Lower lobe of right lung (tissue), 2 donors: ENCODE measurements at regions of chr9 and their contacts with region 1.

Region 1: GRCh38 chr9:4679268-4680172 is at the start of gene CDC37L1:
- DNase-seq: peak; percentile 98
- ATAC-seq: peak; percentile 99 to 100
- H3K4me3 ChIP-seq: peak within 1 kb of the TSS; percentile 81
- H3K27ac ChIP-seq: peak within 1 kb of the TSS; percentile 96
- H3K4me1 ChIP-seq: peaks cover 21% of the 10 kb centered on the region
- H3K27me3 ChIP-seq: no peaks in the 10 kb centered on the region
- CTCF ChIP-seq: peak; percentile 83
- total RNA-seq, gene CDC37L1: 14.3 TPM

Region 2: GRCh38 chr9:4713849-4714248 is 34.3 kb after region 1 on chr9:
- intact Hi-C with region 1: no loop called
- DNase-seq: no peak
- ATAC-seq: peak; percentile 40 to 63
- H3K4me3 ChIP-seq: no peak overlapping the region
- H3K27ac ChIP-seq: no peak overlapping the region
- H3K4me1 ChIP-seq: no peaks in the 10 kb centered on the region
- H3K27me3 ChIP-seq: no peaks in the 10 kb centered on the region
- CTCF ChIP-seq: no peak

Region 3: GRCh38 chr9:4739587-4740387 is 60.3 kb after region 1 on chr9:
- intact Hi-C with region 1: loop called (anchors 10 kb)
- DNase-seq: no peak
- ATAC-seq: no peak
- H3K4me3 ChIP-seq: peak overlapping the region; percentile 98
- H3K27ac ChIP-seq: peak overlapping the region; percentile 94
- H3K4me1 ChIP-seq: peaks cover 19% of the 10 kb centered on the region
- H3K27me3 ChIP-seq: no peaks in the 10 kb centered on the region
- CTCF ChIP-seq: no peak

Region 4: GRCh38 chr9:4886698-4887097 is 207.2 kb after region 1 on chr9:
- intact Hi-C with region 1: no loop called
- DNase-seq: no peak
- ATAC-seq: peak in 1 of 2 donors; percentile 54
- H3K4me3 ChIP-seq: no peak overlapping the region
- H3K27ac ChIP-seq: no peak overlapping the region
- H3K4me1 ChIP-seq: peaks cover 11% of the 10 kb centered on the region
- H3K27me3 ChIP-seq: no peaks in the 10 kb centered on the region
- CTCF ChIP-seq: no peak